Left ventricle myocardium inferior (tissue), 1 donor: ENCODE measurements at regions of chr6 and their contacts with region 1.

Region 1: GRCh38 chr6:37791156-37791919 is 28.2 kb upstream of the ZFAND3 start:
- DNase-seq: peak; percentile 91
- H3K4me3 ChIP-seq: no peak overlapping the region
- H3K27ac ChIP-seq: no peak overlapping the region
- H3K4me1 ChIP-seq: peaks cover 16% of the 10 kb centered on the region
- H3K27me3 ChIP-seq: peaks cover 6% of the 10 kb centered on the region
- CTCF ChIP-seq: peak; percentile 98

Region 2: GRCh38 chr6:37838219-37838921 is 47.0 kb after region 1 on chr6:
- intact Hi-C with region 1: no loop called
- DNase-seq: no peak
- H3K4me3 ChIP-seq: no peak overlapping the region
- H3K27ac ChIP-seq: no peak overlapping the region
- H3K4me1 ChIP-seq: peaks cover 34% of the 10 kb centered on the region
- H3K27me3 ChIP-seq: no peaks in the 10 kb centered on the region
- CTCF ChIP-seq: no peak

Region 3: GRCh38 chr6:38001386-38001785 is 210.0 kb after region 1 on chr6:
- intact Hi-C with region 1: loop called (anchors 10 kb)
- DNase-seq: no peak
- H3K4me3 ChIP-seq: no peak overlapping the region
- H3K27ac ChIP-seq: no peak overlapping the region
- H3K4me1 ChIP-seq: peaks cover 17% of the 10 kb centered on the region
- H3K27me3 ChIP-seq: no peaks in the 10 kb centered on the region
- CTCF ChIP-seq: no peak

Region 4: DNA sequence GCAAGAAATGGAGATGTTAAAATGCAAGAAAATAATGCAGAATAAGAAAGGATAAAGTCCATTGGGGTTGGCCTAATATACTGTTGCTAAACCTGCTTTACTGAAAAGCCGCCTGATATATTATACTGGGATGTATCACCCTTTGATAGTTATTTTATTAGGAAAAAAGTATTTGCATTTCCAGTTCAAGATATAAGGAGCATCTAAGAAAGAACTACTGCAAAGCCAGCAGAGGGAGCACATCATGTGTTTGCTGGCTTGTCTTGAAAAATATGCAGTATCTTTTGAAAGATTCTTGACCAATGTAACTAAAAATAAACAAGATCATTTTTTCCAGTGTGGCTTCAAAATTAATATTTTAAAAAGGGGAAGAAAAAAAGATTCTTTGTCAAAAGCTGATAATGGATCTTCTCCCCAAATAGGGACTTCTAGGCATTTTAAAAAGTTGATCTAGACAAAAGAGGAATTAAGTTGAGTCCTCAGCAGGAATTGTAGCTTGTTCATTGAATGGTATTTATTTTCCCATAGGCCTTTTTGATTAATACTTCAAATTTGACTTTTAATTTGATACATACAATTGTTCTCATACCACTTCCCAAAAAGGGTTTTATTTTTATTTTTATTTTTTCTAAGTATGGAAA is 243.1 kb after region 1 on chr6:
- intact Hi-C with region 1: no loop called
- DNase-seq: no peak
- H3K4me3 ChIP-seq: no peak overlapping the region
- H3K27ac ChIP-seq: no peak overlapping the region
- H3K4me1 ChIP-seq: peaks cover 31% of the 10 kb centered on the region
- H3K27me3 ChIP-seq: no peaks in the 10 kb centered on the region
- CTCF ChIP-seq: peak; percentile 64

Region 5: DNA sequence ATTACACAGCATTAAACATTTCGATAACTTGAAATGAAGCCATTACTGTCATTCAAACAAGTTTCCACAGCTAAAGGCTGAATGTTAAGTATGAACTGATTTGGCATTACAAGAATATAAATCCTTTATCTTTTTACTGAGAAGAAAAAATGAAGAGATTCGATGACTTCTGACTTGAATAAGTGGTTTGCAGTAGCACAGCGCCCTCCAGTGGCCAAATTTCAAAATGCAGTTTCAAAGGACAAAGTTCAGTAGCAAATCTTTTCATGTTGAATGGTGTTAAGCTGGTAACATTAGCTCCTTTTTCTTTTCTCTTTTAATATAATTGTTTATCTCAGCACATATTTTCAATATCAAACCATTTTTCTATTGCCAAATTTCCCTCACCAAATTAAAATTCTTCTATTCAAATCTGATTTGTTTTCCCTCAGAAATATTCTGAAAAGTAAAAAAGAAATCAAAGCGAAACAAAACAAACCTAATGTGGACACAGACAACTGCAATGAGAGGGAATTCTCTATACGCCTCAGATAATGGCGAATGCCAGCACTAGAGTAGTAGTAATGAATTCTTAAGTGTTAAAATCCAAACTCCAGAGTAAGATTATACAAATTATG is 702.7 kb after region 1 on chr6:
- intact Hi-C with region 1: loop called (anchors 10 kb)
- DNase-seq: peak; percentile 47
- H3K4me3 ChIP-seq: no peak overlapping the region
- H3K27ac ChIP-seq: no peak overlapping the region
- H3K4me1 ChIP-seq: peaks cover 3% of the 10 kb centered on the region
- H3K27me3 ChIP-seq: no peaks in the 10 kb centered on the region
- CTCF ChIP-seq: peak; percentile 93